ENCODE measurements at regions of chr19 and their contacts with region 1.

Region 1: GRCh38 chr19:41597600-41598041 is 21.7 kb downstream of the CEACAM21 start:
- DNase-seq: peak; percentile 82
- CTCF ChIP-seq: peak; percentile 94

Region 2: DNA sequence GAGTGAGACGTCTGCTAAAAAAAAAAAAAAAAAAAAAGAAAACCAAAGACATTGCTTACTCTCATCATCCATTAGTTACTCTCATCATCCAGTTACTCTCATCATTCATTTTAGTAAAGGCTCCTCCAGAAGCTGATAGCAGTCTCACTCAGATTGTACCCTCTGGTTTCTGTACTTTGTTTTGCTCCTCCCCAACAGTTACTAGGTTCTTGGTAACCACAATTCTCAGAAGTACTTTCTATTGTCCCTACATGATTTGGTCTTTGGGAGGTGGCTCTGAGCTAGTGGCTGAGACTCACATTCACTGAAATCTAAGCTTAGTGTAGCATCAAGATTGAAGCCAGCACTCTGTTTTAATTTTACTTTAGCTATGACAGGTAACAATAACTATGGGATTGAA is 140.4 kb before region 1 on chr19:
- CTCF ChIA-PET with region 1: interaction called, 152 read pairs
- POLR2A ChIA-PET with region 1: no interaction called
- DNase-seq: peak; percentile 57
- CTCF ChIP-seq: no peak

Region 3: GRCh38 chr19:41501854-41502253 is 95.8 kb before region 1 on chr19:
- CTCF ChIA-PET with region 1: interaction called, 12 read pairs
- POLR2A ChIA-PET with region 1: no interaction called
- DNase-seq: no peak
- CTCF ChIP-seq: no peak

Measured in GM10248 (cell line).